A549 (cell line): ENCODE measurements at regions of chr12 and their contacts with region 1.

Region 1: GRCh38 chr12:115916910-115917668 is 360.4 kb downstream of the MED13L start:
- DNase-seq: peak; percentile 44 to 60
- ATAC-seq: peak; percentile 85 to 94
- H3K4me3 ChIP-seq: peak overlapping the region; percentile 40
- H3K27ac ChIP-seq: peak overlapping the region; percentile 65 to 76; a peak in 5 of 6 replicates
- H3K4me1 ChIP-seq: no peaks in the 10 kb centered on the region
- CTCF ChIP-seq: peak; percentile 94
- EP300 ChIP-seq: no peak
- POLR2A ChIP-seq: no peak
- RAD21 ChIP-seq: peak; percentile 94 to 99

Region 2: DNA sequence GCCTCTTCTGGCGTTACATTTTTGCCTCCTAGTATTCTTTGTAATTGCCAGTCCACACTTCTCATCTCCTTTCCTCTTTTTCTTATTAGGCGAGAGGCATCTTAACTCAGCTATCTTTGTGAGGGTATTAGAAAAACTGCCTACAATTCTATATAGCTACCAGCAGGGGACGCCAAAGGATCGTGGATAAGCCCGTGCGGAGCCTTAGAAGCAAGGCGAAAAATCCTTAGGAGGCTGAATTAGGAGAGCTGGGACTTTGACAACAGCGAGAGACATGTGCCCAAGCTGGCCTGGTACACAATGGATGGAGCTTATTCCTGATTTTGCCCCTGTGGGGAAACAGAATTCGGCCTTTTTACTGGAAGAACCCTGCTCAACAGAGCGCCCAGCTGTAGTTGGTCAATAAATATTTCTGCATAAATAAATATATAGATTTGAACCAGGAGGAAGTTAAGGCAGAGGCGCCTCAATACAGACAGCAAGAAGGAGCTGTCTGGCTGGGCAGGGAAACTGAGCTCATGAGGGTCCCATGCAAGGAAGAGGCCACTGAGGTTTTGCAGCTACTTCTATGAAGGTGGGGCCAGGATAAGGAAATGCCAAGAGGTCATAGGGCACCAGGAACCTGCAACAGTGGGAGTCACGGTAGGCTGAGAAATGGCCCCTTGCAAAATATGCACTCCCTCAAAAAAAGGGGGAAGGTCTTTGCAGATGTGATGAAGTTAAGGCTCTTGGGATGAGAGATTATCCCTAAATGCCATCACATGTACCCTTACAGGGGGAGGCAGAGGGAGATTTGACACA is 1936.4 kb before region 1 on chr12:
- CTCF ChIA-PET with region 1: interaction called, 19 read pairs
- POLR2A ChIA-PET with region 1: no interaction called
- DNase-seq: peak; percentile 36 to 79
- ATAC-seq: peak; percentile 71 to 89
- H3K4me3 ChIP-seq: no peak overlapping the region
- H3K27ac ChIP-seq: no peak overlapping the region
- H3K4me1 ChIP-seq: no peaks in the 10 kb centered on the region
- CTCF ChIP-seq: peak; percentile 96
- EP300 ChIP-seq: no peak
- POLR2A ChIP-seq: no peak
- RAD21 ChIP-seq: peak; percentile 94 to 100

Region 3: GRCh38 chr12:114662512-114663177 is 1254.4 kb before region 1 on chr12:
- CTCF ChIA-PET with region 1: interaction called, 31 read pairs
- POLR2A ChIA-PET with region 1: no interaction called
- DNase-seq: peak; percentile 76 to 90
- ATAC-seq: peak; percentile 73 to 79
- H3K4me3 ChIP-seq: no peak overlapping the region
- H3K27ac ChIP-seq: peak overlapping the region; percentile 83 to 85
- H3K4me1 ChIP-seq: peaks cover 38% of the 10 kb centered on the region
- CTCF ChIP-seq: peak; percentile 95
- EP300 ChIP-seq: peak; percentile 52 to 54; a peak in 3 of 5 replicates
- POLR2A ChIP-seq: no peak
- RAD21 ChIP-seq: peak; percentile 97 to 99

Region 4: GRCh38 chr12:115794659-115795081 is 122.4 kb before region 1 on chr12:
- CTCF ChIA-PET with region 1: interaction called, 14 read pairs
- POLR2A ChIA-PET with region 1: no interaction called
- DNase-seq: peak in 1 of 2 experiments; percentile 52
- ATAC-seq: peak in 1 of 2 experiments; percentile 54; a peak in 2 of 6 replicates
- H3K4me3 ChIP-seq: no peak overlapping the region
- H3K27ac ChIP-seq: peak overlapping the region in 1 of 2 experiments; percentile 44; a peak in 1 of 6 replicates
- H3K4me1 ChIP-seq: no peaks in the 10 kb centered on the region
- CTCF ChIP-seq: peak; percentile 26; the same call in 2 of the 3 replicates
- EP300 ChIP-seq: no peak
- POLR2A ChIP-seq: no peak
- RAD21 ChIP-seq: peak; percentile 38 to 64

Region 5: GRCh38 chr12:115898670-115899069 is 18.4 kb before region 1 on chr12:
- CTCF ChIA-PET with region 1: interaction called, 12 read pairs
- POLR2A ChIA-PET with region 1: no interaction called
- DNase-seq: peak in 1 of 2 experiments; percentile 28
- ATAC-seq: peak in 1 of 2 experiments; percentile 72; a peak in 3 of 6 replicates
- H3K4me3 ChIP-seq: no peak overlapping the region
- H3K27ac ChIP-seq: no peak overlapping the region
- H3K4me1 ChIP-seq: no peaks in the 10 kb centered on the region; the same call in 2 of the 3 replicates
- CTCF ChIP-seq: 0 out of 3 replicates have a peak, but pooled peaks have one; percentile 11
- EP300 ChIP-seq: no peak
- POLR2A ChIP-seq: no peak
- RAD21 ChIP-seq: peak in 1 of 2 experiments; percentile 10; a peak in 1 of 5 replicates

Region 6: DNA sequence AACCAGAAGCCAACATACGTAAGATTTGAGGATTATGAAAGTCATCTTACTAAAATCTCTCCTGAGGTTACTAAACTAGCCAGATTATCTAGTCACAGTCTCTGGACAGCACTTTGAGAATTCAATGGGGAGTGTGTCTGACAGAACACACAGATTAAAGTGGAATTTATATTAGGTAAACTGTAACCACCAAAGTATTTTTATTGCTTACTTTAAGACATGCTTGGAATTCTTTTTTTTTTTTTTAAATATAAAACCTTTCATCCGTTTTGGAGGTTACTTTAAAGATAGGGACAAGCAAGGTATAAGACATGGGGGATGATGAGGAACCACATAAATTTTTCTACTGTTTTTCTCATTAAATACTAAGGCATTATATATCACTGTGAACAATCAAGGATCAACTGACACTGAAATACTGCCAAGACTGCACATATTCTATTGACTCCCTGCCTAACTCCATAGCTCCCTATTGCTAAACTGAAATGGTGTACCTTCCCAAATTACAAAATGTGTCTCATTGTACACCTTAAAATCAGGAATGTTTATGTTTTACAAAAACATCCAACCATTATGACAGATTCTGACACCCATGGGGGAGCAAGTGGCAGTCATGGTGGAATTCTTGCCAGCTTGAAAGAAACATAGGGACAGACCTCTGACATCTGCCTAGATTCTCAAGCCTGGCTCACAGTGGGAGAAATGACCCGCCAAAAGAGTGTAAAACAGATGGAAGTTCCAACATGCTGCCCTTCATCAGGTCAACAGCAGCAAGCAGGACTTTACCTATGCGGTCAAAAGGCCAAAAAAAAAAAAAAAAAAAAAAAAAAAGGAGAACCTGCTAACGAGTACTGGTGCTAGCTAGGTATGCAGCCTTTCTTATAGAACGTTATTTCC is 121.1 kb after region 1 on chr12:
- CTCF ChIA-PET with region 1: no interaction called
- POLR2A ChIA-PET with region 1: no interaction called
- DNase-seq: peak in 1 of 2 experiments; percentile 39
- ATAC-seq: peak; percentile 41 to 73; a peak in 4 of 6 replicates
- H3K4me3 ChIP-seq: no peak overlapping the region
- H3K27ac ChIP-seq: peak overlapping the region; percentile 40 to 68; a peak in 5 of 6 replicates
- H3K4me1 ChIP-seq: peaks cover 38% of the 10 kb centered on the region
- CTCF ChIP-seq: no peak
- EP300 ChIP-seq: no peak
- POLR2A ChIP-seq: no peak
- RAD21 ChIP-seq: no peak